Posterior cingulate gyrus (tissue), 11 donors: ENCODE measurements at regions of chr11 and their contacts with region 1.

Region 1: DNA sequence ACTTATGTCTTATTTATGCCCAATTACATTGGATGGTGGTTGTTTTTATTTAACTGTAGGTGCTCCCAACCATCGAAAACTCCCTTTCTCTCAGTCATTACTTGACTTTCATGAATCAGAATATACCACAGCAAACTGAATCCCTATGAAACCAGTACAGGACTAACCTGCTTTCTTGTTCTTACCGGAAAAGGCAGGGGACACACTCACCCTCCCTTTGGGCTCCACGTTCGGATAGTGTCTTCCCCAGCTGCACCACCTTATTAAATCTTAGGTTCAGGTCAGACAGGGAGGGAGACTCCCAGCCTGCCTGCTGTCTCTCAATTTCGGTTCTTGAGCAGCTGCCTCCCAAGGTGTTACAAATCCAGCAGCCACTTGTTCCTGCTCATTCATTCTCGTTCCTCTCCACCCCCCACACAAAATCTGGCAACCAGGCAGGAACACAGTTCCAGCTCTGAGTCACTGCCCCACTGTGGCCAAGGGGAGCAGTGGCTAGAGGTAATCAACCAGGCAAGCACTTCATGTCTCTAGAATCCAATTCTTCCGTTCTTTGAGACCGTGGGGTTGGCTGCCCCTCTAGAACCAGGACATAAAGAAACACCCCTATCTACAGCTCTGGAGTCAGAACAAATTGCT is 133.0 kb downstream of the PLEKHA7 start:
- DNase-seq: peak in 4 of 10 donors; percentile 8 to 17 (median 14)

Region 2: DNA sequence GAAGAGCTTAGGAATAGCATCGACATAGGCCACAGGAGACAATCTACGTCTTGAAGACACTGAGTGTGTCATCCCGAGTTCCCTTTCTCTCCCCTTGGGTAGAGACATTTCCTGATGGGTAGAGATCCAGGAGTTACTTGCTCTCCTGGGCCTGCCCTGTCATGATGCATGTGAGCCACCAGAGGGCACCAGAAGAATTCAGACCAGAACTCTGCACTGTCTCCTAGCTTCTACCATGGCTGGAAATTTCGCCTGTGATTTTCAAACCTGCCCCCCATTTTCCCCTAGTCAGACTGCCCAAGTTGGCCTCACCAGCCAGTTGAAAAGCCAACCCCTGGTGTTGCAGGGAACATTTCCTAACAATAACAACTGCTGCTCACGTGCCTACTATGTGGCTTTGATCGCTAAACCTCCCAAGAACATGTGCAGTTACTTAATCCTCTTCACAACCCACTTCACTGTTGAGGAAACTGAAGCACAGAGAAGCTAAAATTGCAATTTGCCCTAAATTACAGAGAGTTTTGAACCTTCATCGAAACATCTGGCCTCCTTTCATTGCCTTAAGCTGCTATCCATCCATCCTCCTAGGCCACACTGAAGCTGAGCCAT is 95.6 kb before region 1 on chr11:
- intact Hi-C with region 1: loop called (anchors 2 kb)
- DNase-seq: peak; percentile 63 to 96 (median 77)

Region 3: DNA sequence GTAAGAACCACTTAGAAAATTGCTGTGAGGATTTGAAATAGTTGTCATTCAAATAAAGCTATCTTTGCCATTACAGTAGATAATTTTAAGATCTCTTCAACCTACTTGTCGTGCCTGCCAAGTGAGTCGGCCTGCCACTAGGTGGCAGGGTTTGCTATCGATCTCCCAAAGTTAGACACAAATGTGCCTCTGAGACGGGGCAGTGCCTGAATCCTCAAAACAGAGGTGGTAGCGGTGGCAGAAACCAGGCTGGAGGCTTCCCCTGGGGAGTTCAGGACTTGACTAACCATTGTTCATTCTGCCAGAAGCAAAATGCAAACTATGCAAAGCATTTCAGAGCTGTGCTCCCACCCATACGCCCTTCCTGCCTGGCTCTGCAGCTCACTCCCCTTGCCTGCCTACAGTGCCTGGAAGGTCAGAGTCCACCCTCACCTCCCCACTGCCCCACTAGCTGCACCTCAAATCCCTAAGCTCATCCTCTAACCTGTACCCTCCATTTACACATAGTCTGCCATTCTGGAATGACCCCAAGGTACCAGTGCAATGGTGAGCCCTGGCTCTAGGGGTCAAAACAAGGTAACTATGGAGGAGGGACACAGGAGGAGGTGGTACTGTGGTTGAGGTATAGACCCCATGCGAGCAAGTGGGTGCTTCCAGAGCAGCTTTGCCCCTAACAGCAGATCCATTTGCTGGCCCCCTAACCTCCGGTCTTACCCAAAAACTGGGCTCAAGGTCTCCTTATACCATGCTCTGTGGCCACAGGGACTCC is 60.7 kb before region 1 on chr11:
- intact Hi-C with region 1: loop called (anchors 5 kb)
- DNase-seq: peak in 9 of 10 donors; percentile 54 to 89 (median 75)